G401 (cell line): ENCODE measurements at regions of chr5 and their contacts with region 1.

Region 1: GRCh38 chr5:154885439-154885838 is 27.0 kb downstream of the CNOT8 start:
- DNase-seq: no peak

Region 2: GRCh38 chr5:154647114-154647760 is 238.2 kb before region 1 on chr5:
- in situ Hi-C with region 1: loop called (anchors 10 kb)
- DNase-seq: peak; percentile 15